Heart right ventricle (tissue), 16 donors: ENCODE measurements at regions of chr4 and their contacts with region 1.

Region 1: DNA sequence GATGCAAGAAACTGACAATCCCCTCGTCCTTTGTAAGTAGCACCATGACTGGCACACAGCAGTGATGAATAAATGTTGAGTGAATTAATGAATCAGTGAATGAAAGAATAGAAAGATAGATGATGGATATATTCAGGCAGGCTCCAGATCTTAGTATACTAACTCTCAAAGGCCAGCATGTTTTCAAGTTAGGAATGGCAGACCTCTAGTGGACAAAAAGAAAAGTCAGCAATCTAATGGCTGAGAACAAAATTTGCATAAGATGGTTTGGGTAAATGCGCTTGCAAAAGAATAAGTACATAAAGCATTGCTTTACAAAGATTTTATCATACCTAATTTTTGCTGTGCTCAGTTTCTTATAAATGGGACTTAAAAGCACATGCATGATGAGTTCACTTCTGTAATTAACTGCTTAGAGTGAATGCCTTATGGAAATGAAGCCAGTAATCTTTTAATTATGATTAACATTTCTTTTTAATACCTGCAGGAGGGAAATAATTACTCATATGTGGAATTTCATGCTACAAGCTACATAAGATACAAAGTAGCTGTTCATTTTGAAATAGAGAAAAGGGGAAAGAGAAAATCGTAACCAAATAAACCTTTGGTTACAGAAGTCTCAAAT is 126.9 kb upstream of the GPRIN3 start:
- DNase-seq: no peak
- ATAC-seq: peak in 6 of 8 donors; percentile 43 to 79 (median 56)
- H3K4me3 ChIP-seq: no peak overlapping the region
- H3K27ac ChIP-seq: no peak overlapping the region
- H3K4me1 ChIP-seq: no peaks in the 10 kb centered on the region
- H3K27me3 ChIP-seq: no peaks in the 10 kb centered on the region
- CTCF ChIP-seq: peak; percentile 44 to 85 (median 81)

Region 2: DNA sequence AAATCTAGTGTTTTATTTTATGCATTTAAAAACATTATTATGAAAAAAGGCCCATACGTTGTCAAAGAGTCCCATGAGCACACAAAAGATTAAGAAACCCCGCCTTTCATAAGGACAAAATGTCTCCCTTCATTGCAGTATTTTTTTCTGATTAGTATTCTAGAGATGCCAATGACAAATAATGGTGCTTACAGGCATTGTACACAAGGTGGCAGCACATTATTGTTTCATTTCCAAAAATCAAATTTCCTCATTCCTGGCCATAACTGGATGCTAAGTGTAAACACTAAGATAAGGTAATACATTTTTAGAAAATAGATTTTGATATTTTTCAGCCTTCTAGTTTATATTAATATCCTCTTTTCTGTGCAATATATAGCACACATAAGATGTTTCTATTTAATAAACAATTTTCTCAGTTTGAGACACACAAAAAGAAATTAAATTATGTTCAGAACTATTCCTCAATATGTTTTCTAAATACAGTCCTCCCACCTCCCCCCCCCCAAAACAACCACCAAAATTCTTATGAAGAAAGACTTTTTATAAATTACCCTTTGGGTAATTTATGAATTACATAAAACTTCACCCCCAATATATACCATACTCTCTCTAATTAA is 275.5 kb before region 1 on chr4:
- intact Hi-C with region 1: loop called in 8 of 10 experiments (anchors 1 to 10 kb)
- DNase-seq: no peak
- ATAC-seq: peak in 5 of 8 donors; percentile 35 to 72 (median 42)
- H3K4me3 ChIP-seq: no peak overlapping the region
- H3K27ac ChIP-seq: no peak overlapping the region
- H3K4me1 ChIP-seq: no peaks in the 10 kb centered on the region
- H3K27me3 ChIP-seq: no peaks in the 10 kb centered on the region
- CTCF ChIP-seq: peak; percentile 47 to 85 (median 78)

Region 3: GRCh38 chr4:89164400-89164799 is 270.1 kb before region 1 on chr4:
- intact Hi-C with region 1: loop called in 8 of 10 experiments (anchors 1 to 10 kb)
- DNase-seq: no peak
- ATAC-seq: no peak
- H3K4me3 ChIP-seq: no peak overlapping the region
- H3K27ac ChIP-seq: no peak overlapping the region
- H3K4me1 ChIP-seq: no peaks in the 10 kb centered on the region
- H3K27me3 ChIP-seq: no peaks in the 10 kb centered on the region
- CTCF ChIP-seq: no peak

Region 4: DNA sequence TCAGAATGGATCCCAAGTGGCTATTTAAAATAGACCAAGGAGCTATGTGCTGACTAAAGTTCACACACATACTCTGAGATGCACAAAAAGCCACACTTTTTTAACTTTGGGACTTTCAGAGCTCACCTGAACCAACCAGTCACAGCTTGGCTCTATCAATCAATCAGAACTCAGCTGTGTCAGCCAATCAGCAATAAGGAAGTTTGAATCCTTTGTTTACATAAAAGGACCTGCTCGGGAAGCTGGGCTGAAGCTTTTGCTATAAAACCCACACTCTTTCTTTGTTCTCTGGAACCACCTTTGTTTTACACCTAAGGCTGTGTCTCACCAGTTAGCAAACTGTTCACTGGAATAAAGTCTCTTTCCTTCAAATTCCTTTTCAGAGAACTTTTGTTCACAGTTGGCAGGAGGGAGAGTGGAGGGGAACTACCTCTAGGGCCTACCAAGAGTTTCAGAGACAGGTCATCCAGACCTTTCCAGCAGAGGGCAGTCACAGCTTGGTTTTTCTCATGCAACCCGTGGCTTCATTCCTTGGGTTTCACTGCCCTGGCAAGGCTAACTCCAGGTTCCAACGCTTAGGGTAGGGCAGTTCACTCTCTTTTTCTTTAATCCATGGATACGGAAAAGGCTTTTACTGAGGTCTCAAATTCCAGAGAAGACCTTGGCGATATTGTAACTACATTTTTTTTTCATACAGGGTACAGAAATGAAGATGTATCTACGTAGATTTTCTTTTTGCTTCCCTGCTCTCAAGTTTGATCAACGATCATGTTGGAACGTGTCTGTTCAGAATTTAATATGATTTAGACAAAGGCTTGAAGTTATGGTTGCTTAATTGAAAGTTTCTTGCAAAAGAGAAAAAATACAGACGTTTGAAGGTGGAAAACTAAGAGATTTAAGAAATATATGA is 207.6 kb before region 1 on chr4:
- intact Hi-C with region 1: loop called (anchors 1 to 5 kb)
- DNase-seq: peak; percentile 26 to 87
- ATAC-seq: peak; percentile 84 to 98 (median 94)
- H3K4me3 ChIP-seq: no peak overlapping the region
- H3K27ac ChIP-seq: no peak overlapping the region
- H3K4me1 ChIP-seq: no peaks in the 10 kb centered on the region
- H3K27me3 ChIP-seq: no peaks in the 10 kb centered on the region
- CTCF ChIP-seq: peak; percentile 30 to 83 (median 78)

Region 5: DNA sequence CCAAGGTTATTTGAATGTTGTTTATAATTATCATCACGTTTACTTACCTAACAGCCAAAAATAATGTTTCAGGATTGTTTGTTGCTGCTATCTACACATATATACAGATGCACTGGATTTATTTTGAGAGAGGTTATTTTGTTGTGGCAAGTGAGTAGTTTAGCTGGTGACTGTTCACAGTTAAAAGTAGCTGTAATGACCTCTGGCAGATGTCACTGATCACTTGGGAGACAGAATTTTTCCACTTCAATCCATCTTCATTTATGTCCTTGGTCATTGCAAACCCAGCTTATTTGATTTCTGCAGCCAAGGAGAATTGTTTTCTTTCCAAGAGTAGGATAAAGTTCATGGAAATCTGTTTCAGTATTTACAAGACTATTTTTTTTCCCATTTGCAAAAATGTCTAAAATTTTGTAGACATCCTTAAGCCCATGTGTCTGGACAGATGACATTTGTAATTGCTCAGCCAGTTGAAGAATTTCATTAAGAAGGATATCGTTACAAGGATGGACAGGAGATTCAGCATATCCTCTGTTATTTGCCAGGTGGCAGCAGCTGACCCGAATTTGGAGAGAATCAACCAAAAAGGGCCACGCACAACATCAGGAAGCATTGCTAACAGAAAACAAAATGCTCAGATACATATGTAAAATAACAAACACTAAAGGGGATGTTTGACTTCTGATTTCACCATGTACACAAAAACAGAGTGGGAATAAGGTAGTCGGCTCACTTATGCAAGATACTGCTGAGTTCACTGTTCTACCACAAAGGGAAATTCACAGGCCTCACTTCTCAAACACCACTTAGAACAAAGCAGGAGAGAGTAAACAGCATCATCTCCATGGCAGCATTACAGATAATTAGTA is 191.4 kb before region 1 on chr4:
- intact Hi-C with region 1: loop called in 1 of 10 experiments (anchors 5 kb)
- DNase-seq: no peak
- ATAC-seq: peak in 6 of 8 donors; percentile 34 to 78 (median 68)
- H3K4me3 ChIP-seq: no peak overlapping the region
- H3K27ac ChIP-seq: peak overlapping the region in 4 of 10 donors; percentile 13 to 54 (median 32)
- H3K4me1 ChIP-seq: peaks cover 0 to 37% (median 20%) of the 10 kb centered on the region in 9 donors
- H3K27me3 ChIP-seq: no peaks in the 10 kb centered on the region
- CTCF ChIP-seq: peak in 3 of 9 donors; percentile 19 to 38 (median 25)

Region 6: GRCh38 chr4:89307446-89308160 is 126.9 kb before region 1 on chr4 and contains the start of gene GPRIN3:
- intact Hi-C with region 1: loop called in 1 of 10 experiments (anchors 10 kb)
- DNase-seq: peak; percentile 62 to 73
- ATAC-seq: peak; percentile 59 to 87 (median 75)
- H3K4me3 ChIP-seq: peak within 1 kb of the TSS; percentile 34 to 87 (median 77)
- H3K27ac ChIP-seq: peak within 1 kb of the TSS; percentile 25 to 93 (median 79)
- H3K4me1 ChIP-seq: peaks cover 0 to 46% (median 12%) of the 10 kb centered on the region in 9 donors
- H3K27me3 ChIP-seq: peaks cover 0 to 7% (median 0%) of the 10 kb centered on the region in 7 donors
- CTCF ChIP-seq: no peak
- total RNA-seq, gene GPRIN3: 4.3 to 12.2 (median 9.8) TPM